SK-N-SH (cell line): ENCODE measurements at regions of chr4 and their contacts with region 1.

Region 1: DNA sequence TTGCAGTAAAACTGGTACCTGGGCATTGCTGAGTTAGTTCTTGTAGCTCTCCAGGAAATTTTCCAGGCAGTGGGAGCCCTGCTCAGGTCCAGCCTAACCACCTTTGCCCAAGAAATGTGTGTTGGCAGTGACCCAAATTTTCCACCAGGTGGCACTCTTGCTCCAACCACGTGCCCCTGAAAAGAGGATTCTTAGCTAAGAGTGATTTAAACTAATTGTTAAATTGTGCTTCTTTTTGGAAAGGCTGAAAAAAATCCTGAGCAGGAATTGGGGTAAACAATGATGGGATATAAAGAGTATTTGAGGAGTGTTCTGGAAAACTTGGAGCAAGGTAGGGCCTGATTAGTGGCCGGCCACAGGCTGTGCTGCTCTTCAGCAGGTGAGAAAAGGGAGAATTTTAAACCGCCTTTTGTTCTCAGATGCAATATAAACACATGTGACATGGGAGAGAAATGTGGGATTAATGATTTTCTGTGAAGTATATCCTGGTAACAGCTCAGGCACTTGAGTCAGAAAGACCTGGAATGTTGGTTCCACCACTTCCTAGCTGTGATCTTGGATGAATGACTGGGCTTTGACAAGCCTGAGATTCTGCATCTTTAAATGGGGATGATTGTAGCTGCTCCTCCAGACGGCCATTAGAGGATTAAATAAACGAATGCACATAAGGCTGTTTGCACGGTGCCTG is 219.6 kb downstream of the PTTG2 start:
- DNase-seq: peak; percentile 76
- H3K4me3 ChIP-seq: peak overlapping the region in 1 of 2 experiments; percentile 40; a peak in 1 of 4 replicates
- H3K27ac ChIP-seq: peak overlapping the region in 1 of 2 experiments; percentile 42; a peak in 2 of 4 replicates
- H3K4me1 ChIP-seq: peaks cover 1 to 6% of the 10 kb centered on the region in 2 experiments; a peak in 3 of 4 replicates
- H3K27me3 ChIP-seq: no peaks in the 10 kb centered on the region
- CTCF ChIP-seq: peak; percentile 96
- EP300 ChIP-seq: no peak
- RAD21 ChIP-seq: peak; percentile 97

Region 2: GRCh38 chr4:37981844-37982720 is 197.8 kb before region 1 on chr4:
- CTCF ChIA-PET with region 1: no interaction called
- POLR2A ChIA-PET with region 1: no interaction called
- DNase-seq: no peak
- H3K4me3 ChIP-seq: no peak overlapping the region
- H3K27ac ChIP-seq: no peak overlapping the region
- H3K4me1 ChIP-seq: peaks cover 8 to 10% of the 10 kb centered on the region in 2 experiments; a peak in 2 of 4 replicates
- H3K27me3 ChIP-seq: no peaks in the 10 kb centered on the region
- CTCF ChIP-seq: no peak
- EP300 ChIP-seq: no peak
- RAD21 ChIP-seq: no peak

Region 3: DNA sequence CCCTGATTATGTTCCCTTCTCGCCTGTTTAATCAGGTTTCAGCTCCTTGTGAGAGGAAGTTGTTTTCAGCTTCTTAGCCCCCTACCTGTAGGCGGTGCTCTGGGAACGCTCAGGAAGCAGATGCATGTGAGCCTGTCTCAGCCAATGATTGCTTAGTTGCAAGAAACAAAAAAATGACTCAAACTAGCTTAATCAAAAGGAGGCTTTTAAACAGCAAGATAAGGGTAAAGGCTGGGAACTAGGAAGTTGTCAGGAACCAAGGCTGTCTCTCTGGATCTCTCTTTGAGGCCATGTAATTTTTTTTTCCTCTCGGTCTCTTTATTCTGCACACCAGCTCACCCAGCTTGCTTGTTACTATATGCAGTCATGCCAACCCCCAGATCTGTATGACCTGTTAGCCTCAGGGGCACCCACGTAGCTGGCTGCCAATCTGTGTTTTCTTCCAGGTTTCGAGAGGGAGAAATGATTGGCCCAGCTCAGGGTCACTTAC is 110.5 kb before region 1 on chr4:
- CTCF ChIA-PET with region 1: interaction called, 62 read pairs
- POLR2A ChIA-PET with region 1: no interaction called
- DNase-seq: peak; percentile 53
- H3K4me3 ChIP-seq: no peak overlapping the region
- H3K27ac ChIP-seq: peak overlapping the region in 1 of 2 experiments; percentile 36; a peak in 1 of 4 replicates
- H3K4me1 ChIP-seq: peaks cover 4 to 6% of the 10 kb centered on the region in 2 experiments; a peak in 2 of 4 replicates
- H3K27me3 ChIP-seq: no peaks in the 10 kb centered on the region
- CTCF ChIP-seq: peak; percentile 71
- EP300 ChIP-seq: no peak
- RAD21 ChIP-seq: peak; percentile 76

Region 4: GRCh38 chr4:38319456-38320342 is 139.9 kb after region 1 on chr4:
- CTCF ChIA-PET with region 1: interaction called, 29 read pairs
- POLR2A ChIA-PET with region 1: no interaction called
- DNase-seq: peak; percentile 94
- H3K4me3 ChIP-seq: no peak overlapping the region; a peak in 1 of 4 replicates
- H3K27ac ChIP-seq: peak overlapping the region in 1 of 2 experiments; percentile 89; a peak in 2 of 4 replicates
- H3K4me1 ChIP-seq: peaks cover 0 to 7% of the 10 kb centered on the region in 2 experiments; a peak in 1 of 4 replicates
- H3K27me3 ChIP-seq: no peaks in the 10 kb centered on the region
- CTCF ChIP-seq: peak; percentile 94
- EP300 ChIP-seq: peak in 1 of 2 experiments; percentile 58; a peak in 2 of 4 replicates
- RAD21 ChIP-seq: peak; percentile 94

Region 5: GRCh38 chr4:38591617-38592337 is 411.9 kb after region 1 on chr4:
- CTCF ChIA-PET with region 1: no interaction called
- POLR2A ChIA-PET with region 1: no interaction called
- DNase-seq: no peak
- H3K4me3 ChIP-seq: no peak overlapping the region
- H3K27ac ChIP-seq: no peak overlapping the region
- H3K4me1 ChIP-seq: peaks cover 0 to 5% of the 10 kb centered on the region in 2 experiments; a peak in 1 of 4 replicates
- H3K27me3 ChIP-seq: no peaks in the 10 kb centered on the region
- CTCF ChIP-seq: no peak
- EP300 ChIP-seq: no peak
- RAD21 ChIP-seq: no peak

Region 6: DNA sequence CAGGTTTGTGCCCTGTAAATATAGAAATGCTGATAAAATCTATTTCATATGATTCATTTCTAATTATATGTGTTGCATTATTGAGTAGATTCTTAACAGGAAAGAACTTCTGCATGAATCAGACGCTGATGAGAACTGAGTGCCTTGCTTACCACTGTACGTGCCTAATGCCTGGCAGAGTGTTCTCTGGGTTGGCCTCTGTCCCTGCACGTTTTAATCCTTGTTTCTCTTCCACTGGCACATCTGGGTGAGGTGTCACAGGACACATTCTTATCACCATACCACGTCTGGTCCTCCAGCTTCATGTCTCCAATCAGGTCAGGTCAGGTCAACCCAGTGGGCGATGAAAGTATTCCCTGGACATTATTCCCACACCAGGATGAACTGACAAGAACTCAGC is 537.8 kb after region 1 on chr4:
- CTCF ChIA-PET with region 1: interaction called, 12 read pairs
- POLR2A ChIA-PET with region 1: no interaction called
- DNase-seq: no peak
- H3K4me3 ChIP-seq: no peak overlapping the region
- H3K27ac ChIP-seq: no peak overlapping the region
- H3K4me1 ChIP-seq: peaks cover 0 to 3% of the 10 kb centered on the region in 2 experiments; a peak in 1 of 4 replicates
- H3K27me3 ChIP-seq: no peaks in the 10 kb centered on the region
- CTCF ChIP-seq: no peak
- EP300 ChIP-seq: no peak
- RAD21 ChIP-seq: no peak

Region 7: GRCh38 chr4:38730830-38731646 is 551.2 kb after region 1 on chr4:
- CTCF ChIA-PET with region 1: interaction called, 182 read pairs
- POLR2A ChIA-PET with region 1: no interaction called
- DNase-seq: peak; percentile 82
- H3K4me3 ChIP-seq: no peak overlapping the region; a peak in 1 of 4 replicates
- H3K27ac ChIP-seq: no peak overlapping the region
- H3K4me1 ChIP-seq: no peaks in the 10 kb centered on the region
- H3K27me3 ChIP-seq: no peaks in the 10 kb centered on the region
- CTCF ChIP-seq: peak; percentile 98
- EP300 ChIP-seq: no peak
- RAD21 ChIP-seq: peak; percentile 94

Region 8: DNA sequence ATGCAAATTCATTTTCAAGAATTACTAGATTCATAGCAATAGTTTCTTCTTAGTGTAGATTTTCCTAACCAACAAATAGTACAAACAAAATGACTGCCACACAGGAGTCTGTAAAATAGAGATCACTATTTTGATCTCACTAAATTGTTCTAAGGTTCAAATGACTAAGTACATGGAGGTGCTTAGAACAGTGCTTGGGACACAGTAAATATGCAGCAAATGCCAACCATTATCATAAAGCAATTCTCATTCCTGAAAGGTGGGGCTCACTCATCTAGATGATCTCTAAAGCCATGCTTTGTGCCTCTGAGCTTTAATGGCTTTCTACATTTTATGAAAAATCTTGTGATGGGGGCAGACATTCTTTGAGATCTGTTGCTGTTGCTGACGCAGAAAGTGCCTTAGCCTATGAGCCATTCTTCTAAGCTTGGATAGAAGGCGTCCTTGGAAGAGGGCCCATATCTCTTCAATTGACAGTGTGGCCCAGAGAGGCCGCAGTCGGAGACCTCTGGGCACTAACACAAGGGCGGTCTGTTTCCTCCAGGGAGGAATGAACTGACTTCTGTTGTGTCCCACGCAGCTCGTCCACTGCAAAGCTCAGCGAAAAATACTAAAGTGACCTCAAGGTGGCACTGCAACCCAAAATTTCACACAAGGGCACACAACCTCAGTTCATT is 579.4 kb after region 1 on chr4:
- CTCF ChIA-PET with region 1: interaction called, 23 read pairs
- POLR2A ChIA-PET with region 1: no interaction called
- DNase-seq: peak; percentile 58
- H3K4me3 ChIP-seq: no peak overlapping the region; a peak in 1 of 4 replicates
- H3K27ac ChIP-seq: no peak overlapping the region
- H3K4me1 ChIP-seq: no peaks in the 10 kb centered on the region; a peak in 1 of 4 replicates
- H3K27me3 ChIP-seq: no peaks in the 10 kb centered on the region
- CTCF ChIP-seq: peak; percentile 86
- EP300 ChIP-seq: no peak
- RAD21 ChIP-seq: peak; percentile 87